AG04449 (cell line): ENCODE measurements at regions of chr17 and their contacts with region 1.

Region 1: GRCh38 chr17:16453493-16453851 is 38.1 kb downstream of the TRPV2 start:
- DNase-seq: no peak
- H3K4me3 ChIP-seq: no peak overlapping the region
- CTCF ChIP-seq: no peak

Region 2: DNA sequence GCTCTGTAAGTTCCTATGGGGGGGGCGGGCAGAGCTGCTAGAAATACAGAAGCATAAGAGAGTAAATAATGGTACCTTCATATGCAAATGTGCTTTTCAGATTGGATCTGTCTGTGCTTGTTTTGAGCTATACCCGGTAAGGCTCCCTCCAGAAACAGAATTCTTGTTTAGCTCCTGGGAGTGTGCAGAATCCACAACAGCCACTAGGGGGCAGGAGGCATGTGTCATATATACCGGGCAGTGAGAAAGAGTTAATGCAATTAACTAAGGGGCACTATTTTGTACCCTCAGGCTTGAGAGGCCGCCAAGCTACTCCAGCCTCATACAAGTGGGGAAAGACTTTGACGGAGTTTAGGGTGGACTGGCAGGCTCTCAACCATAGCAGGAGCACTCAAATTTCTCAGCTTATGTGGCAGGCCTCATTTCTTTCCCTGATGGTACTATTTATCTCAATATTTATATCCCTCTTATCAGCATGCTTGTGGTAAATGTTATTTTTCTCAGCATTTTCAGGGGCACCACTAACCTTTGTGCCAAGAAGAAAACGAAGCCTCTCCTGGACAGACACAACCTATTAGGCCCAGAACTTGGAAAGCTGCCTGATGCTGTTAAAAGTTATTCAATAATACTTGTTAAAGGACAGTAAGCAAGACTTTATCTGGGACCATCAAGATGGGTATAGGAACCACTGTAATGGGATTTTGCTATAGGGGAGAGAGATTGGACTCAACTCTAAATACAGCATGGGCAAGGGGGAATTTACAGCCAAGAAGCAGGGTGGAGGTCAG is 89.5 kb before region 1 on chr17:
- CTCF ChIA-PET with region 1: interaction called, 12 read pairs
- POLR2A ChIA-PET with region 1: no interaction called
- DNase-seq: no peak
- H3K4me3 ChIP-seq: no peak overlapping the region
- CTCF ChIP-seq: peak; percentile 79

Region 3: DNA sequence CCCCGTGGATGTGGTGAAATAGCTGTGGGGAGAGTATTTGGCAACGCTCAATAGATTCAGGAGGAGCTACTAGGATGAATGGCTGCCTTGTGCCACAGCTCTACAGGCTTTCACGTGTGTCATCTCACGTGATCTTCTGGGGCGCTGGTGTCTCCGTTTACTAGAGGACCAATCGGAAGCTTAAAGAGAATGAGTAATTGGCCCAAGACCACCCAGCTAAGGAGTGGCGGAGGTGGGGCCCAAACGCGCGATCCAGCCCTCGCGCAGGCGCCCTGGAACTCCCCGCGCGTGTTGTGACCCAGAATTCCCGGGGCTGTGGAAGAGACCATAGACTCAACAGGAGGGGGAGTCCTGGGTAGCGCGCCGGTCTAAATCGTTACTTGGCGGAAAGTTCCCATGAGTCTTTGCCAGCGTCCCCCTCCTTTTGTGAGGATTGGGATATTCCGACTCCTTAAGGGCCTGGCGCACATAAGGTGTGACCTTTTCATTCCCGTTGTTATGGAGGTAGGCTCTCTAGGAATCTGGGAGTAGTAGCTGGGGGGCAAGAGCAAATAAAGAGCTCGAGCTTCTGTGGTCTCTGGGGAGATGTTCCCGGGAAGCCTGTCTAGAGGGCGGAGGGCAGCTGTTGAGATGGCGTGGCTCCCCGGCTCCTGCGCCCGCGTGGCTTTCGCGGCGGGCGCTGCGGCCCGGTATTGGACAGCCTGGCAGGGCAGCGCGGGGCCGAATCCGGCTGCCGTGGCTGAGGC is 14.7 kb before region 1 on chr17:
- CTCF ChIA-PET with region 1: interaction called, 60 read pairs
- POLR2A ChIA-PET with region 1: interaction called, 8 read pairs
- DNase-seq: peak; percentile 99
- H3K4me3 ChIP-seq: peak overlapping the region; percentile 96
- CTCF ChIP-seq: no peak

Region 4: DNA sequence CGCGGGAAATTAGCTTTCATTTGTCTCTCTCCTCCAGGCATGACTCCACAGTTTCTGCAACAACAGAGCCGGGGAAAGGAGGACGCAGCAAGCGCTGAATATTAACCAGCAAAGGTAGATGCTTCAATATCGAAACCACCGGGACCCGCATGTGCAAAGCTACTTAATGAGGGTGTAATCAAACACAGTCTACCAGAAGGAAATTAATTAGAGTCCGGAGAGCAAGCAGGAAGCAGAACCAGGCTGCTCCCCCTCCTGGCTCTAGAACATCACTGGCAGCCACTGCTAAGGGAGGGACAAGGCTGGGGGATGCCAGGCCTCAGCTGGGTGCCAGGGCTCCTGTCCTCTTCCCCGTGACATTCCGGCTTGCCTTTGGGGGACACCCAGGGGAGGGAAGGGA is 16.8 kb after region 1 on chr17:
- CTCF ChIA-PET with region 1: interaction called, 59 read pairs
- POLR2A ChIA-PET with region 1: interaction called, 3 read pairs
- DNase-seq: no peak
- H3K4me3 ChIP-seq: no peak overlapping the region
- CTCF ChIP-seq: no peak

Region 5: GRCh38 chr17:16491131-16491702 is 37.7 kb after region 1 on chr17:
- CTCF ChIA-PET with region 1: interaction called, 14 read pairs
- POLR2A ChIA-PET with region 1: no interaction called
- DNase-seq: no peak
- H3K4me3 ChIP-seq: peak overlapping the region; percentile 49
- CTCF ChIP-seq: no peak

Region 6: GRCh38 chr17:16537130-16537458 is 83.6 kb after region 1 on chr17:
- CTCF ChIA-PET with region 1: interaction called, 562 read pairs
- POLR2A ChIA-PET with region 1: no interaction called
- DNase-seq: no peak
- H3K4me3 ChIP-seq: no peak overlapping the region
- CTCF ChIP-seq: no peak

Region 7: GRCh38 chr17:17191346-17191792 is 737.9 kb after region 1 on chr17:
- CTCF ChIA-PET with region 1: no interaction called
- POLR2A ChIA-PET with region 1: no interaction called
- DNase-seq: peak; percentile 44
- H3K4me3 ChIP-seq: no peak overlapping the region; the same call in 1 of the 2 replicates
- CTCF ChIP-seq: no peak